ENCODE measurements at regions of chr15 and their contacts with region 1.

Region 1: GRCh38 chr15:79004336-79004735 is 59.5 kb upstream of the CTSH start:
- DNase-seq: no peak
- H3K4me3 ChIP-seq: no peak overlapping the region
- H3K27ac ChIP-seq: no peak overlapping the region
- H3K4me1 ChIP-seq: peaks cover 0 to 10% (median under 1%) of the 10 kb centered on the region in 4 experiments; a peak in 4 of 7 replicates
- H3K27me3 ChIP-seq: no peaks in the 10 kb centered on the region; a peak in 2 of 7 replicates
- CTCF ChIP-seq: no peak
- EP300 ChIP-seq: no peak
- POLR2A ChIP-seq: no peak
- RAD21 ChIP-seq: no peak

Region 2: GRCh38 chr15:78921940-78922339 is 82.4 kb before region 1 on chr15:
- CTCF ChIA-PET with region 1: interaction called, 17 read pairs
- POLR2A ChIA-PET with region 1: interaction called, 3 read pairs
- DNase-seq: no peak
- H3K4me3 ChIP-seq: no peak overlapping the region
- H3K27ac ChIP-seq: no peak overlapping the region
- H3K4me1 ChIP-seq: no peaks in the 10 kb centered on the region
- H3K27me3 ChIP-seq: no peaks in the 10 kb centered on the region
- CTCF ChIP-seq: no peak
- EP300 ChIP-seq: no peak
- POLR2A ChIP-seq: no peak
- RAD21 ChIP-seq: no peak

Region 3: DNA sequence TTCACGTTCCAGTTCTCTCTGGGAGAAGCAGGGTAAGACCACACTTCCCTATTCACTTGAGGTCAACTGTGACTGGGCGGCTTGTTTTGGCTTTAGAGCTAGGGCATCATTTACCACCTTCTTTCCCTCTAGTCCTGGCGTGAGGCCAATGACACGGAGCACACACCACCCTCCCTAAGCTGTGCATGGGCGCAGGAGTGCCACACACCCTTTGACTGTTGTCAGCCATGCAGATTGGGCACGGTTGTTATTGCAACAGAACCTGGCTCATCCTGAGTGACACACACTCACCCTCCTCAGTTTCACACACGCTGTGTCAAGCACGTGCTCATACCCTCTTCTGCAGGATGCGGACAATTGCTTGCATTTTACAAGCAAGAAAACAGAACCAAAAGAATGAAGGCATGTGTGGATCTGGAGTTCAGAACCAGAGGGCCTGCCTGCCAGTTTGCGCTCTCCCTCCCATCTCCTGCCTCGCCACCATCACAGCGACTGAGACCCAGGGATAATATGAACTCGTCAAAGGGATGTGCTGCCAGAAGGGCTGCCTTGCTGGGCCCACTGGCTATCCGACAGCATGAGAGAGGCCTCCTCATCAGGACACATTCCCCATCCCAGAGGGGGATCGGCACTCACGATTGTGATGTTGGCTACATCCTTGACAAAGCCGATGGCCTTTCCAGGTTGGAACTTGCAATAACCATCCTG is 77.1 kb before region 1 on chr15:
- CTCF ChIA-PET with region 1: interaction called, 17 read pairs
- POLR2A ChIA-PET with region 1: interaction called, 3 read pairs
- DNase-seq: no peak
- H3K4me3 ChIP-seq: no peak overlapping the region
- H3K27ac ChIP-seq: no peak overlapping the region
- H3K4me1 ChIP-seq: no peaks in the 10 kb centered on the region
- H3K27me3 ChIP-seq: no peaks in the 10 kb centered on the region; a peak in 1 of 7 replicates
- CTCF ChIP-seq: no peak
- EP300 ChIP-seq: no peak
- POLR2A ChIP-seq: no peak
- RAD21 ChIP-seq: no peak

Region 4: DNA sequence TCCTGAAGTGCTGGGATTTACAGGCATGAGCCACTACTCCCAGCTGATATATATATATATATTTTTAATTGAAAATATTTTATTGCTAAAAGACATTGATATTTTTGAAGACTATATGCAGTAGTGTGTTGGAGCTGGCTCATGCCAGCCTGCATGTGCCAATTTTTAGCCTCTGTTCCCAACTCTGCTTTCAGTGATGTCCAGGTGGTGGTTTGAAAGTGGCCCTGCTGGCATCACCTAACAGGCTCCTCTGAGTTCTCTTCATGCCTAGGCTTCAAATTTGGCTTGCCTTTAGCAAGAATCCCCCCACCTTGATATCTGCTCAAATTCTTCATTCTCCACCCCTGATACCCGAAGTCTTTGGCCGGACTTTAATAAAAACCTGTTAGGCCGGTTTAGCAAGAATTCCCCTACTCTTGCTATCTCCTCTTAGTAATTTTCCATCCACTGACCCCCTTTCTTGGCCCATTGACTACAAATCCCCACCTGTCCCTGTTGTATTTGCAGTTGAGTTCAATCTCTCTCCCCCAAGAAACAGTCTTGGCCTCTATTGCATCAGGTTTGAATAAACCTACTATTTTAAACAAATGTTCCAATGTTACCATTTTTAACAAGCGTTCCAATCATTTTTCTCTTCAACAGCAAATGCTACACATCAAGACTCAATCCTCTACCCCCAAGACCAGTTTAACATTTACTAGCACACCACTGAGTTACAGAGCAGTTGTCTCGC is 35.6 kb before region 1 on chr15:
- CTCF ChIA-PET with region 1: interaction called, 11 read pairs
- POLR2A ChIA-PET with region 1: no interaction called
- DNase-seq: no peak
- H3K4me3 ChIP-seq: peak overlapping the region in 1 of 4 experiments; percentile 12; a peak in 1 of 8 replicates
- H3K27ac ChIP-seq: no peak overlapping the region; the same call in 1 of the 2 replicates
- H3K4me1 ChIP-seq: peaks cover 7 to 19% (median 13%) of the 10 kb centered on the region in 4 experiments; a peak in 5 of 7 replicates
- H3K27me3 ChIP-seq: no peaks in the 10 kb centered on the region
- CTCF ChIP-seq: no peak
- EP300 ChIP-seq: 0 out of 3 replicates have a peak, but pooled peaks of 1 of the 2 experiments have one; percentile 20
- POLR2A ChIP-seq: no peak
- RAD21 ChIP-seq: no peak

Region 5: GRCh38 chr15:78988361-78988911 is 15.9 kb before region 1 on chr15:
- CTCF ChIA-PET with region 1: interaction called, 38 read pairs
- POLR2A ChIA-PET with region 1: no interaction called
- DNase-seq: no peak
- H3K4me3 ChIP-seq: no peak overlapping the region
- H3K27ac ChIP-seq: no peak overlapping the region
- H3K4me1 ChIP-seq: peaks cover 0 to 5% (median 0%) of the 10 kb centered on the region in 4 experiments; a peak in 3 of 7 replicates
- H3K27me3 ChIP-seq: no peaks in the 10 kb centered on the region; a peak in 2 of 7 replicates
- CTCF ChIP-seq: no peak
- EP300 ChIP-seq: no peak
- POLR2A ChIP-seq: no peak
- RAD21 ChIP-seq: no peak

Region 6: DNA sequence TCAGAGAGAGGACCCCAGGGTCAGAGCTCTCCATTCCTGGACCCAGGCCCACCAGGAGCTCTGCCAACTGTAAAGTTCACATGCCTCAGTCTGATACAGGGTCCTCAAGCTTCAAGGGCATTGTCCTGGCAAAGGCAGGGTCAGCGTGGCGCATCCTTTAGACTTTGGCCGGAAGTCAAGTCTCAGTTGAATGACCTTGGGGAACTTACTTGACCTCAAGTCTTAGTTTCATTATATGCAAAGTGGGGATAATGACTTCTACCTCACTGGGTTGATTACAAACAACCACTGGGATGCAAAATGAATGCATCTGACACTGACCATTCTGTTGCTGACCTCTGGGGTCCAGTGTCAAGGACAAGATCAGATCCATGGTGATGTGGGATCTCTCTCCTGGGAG is 11.1 kb after region 1 on chr15:
- CTCF ChIA-PET with region 1: interaction called, 26 read pairs
- POLR2A ChIA-PET with region 1: no interaction called
- DNase-seq: no peak
- H3K4me3 ChIP-seq: no peak overlapping the region
- H3K27ac ChIP-seq: no peak overlapping the region
- H3K4me1 ChIP-seq: no peaks in the 10 kb centered on the region; a peak in 1 of 7 replicates
- H3K27me3 ChIP-seq: no peaks in the 10 kb centered on the region
- CTCF ChIP-seq: no peak
- EP300 ChIP-seq: no peak
- POLR2A ChIP-seq: no peak
- RAD21 ChIP-seq: no peak